GM12878 (cell line): ENCODE measurements at regions of chr11 and their contacts with region 1.

Region 1: DNA sequence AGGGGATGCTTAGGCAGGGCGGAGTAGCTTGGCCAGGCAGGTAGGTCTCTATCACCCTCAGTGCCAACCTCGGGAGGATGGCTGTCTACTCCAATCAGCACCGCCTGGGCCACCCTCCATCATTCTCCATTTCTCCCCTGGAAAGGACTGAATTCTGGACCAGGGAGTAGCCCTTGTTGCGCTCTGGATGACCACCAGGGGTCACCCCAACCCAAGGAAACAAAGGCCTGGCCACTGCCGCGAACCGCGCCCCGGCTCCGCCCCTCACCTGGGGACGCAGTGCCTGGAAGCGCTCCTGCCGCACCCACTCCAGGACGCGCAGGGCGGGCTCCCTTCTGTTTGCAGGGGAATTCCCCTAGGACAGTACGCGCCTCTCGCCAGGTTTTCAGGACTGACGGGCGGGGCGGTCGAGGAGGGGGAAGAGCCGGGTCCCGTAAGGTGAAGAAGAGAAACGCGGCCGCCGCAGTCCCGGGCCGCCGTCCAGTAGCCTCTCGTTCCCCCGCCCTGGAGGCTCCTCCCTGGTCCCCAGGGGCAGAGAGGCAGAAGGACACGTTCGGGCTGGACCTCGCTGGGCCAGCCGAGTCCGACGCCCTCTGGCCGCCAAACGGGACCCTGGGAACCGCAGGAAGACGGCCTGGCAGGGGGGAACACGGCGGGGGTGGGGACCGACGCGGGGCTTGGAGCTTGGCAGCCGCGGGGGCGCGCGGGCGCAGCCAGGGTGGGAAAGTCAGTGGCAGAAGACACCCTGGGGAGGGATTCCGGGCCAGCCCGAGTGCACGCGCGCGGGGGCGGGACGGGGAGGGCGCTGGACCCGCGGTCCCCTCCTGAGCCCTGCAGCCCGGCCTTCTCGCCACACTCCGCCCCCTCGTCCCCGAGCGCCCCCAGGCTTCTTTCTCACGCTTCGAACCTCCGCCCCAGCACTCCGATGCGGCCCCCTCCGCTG is 7.1 kb downstream of the SCN4B start:
- DNase-seq: peak; percentile 35
- ATAC-seq: peak; percentile 96
- H3K4me3 ChIP-seq: peak overlapping the region; percentile 73
- H3K27ac ChIP-seq: no peak overlapping the region
- H3K4me1 ChIP-seq: no peaks in the 10 kb centered on the region
- H3K27me3 ChIP-seq: peaks cover 5 to 10% of the 10 kb centered on the region in 2 experiments
- CTCF ChIP-seq: peak; percentile 82 to 90 (median 86)
- EP300 ChIP-seq: no peak
- POLR2A ChIP-seq: no peak
- RAD21 ChIP-seq: peak; percentile 83

Region 2: GRCh38 chr11:118095493-118095892 is 50.1 kb before region 1 on chr11:
- CTCF ChIA-PET with region 1: no interaction called
- POLR2A ChIA-PET with region 1: no interaction called
- RAD21 ChIA-PET with region 1: no interaction called
- SMC1A ChIA-PET with region 1: no interaction called
- in situ Hi-C with region 1: no loop called
- intact Hi-C with region 1: no loop called
- DNase-seq: no peak
- ATAC-seq: no peak
- H3K4me3 ChIP-seq: no peak overlapping the region
- H3K27ac ChIP-seq: no peak overlapping the region
- H3K4me1 ChIP-seq: no peaks in the 10 kb centered on the region; the same call in 1 of the 2 replicates
- H3K27me3 ChIP-seq: no peaks in the 10 kb centered on the region; a peak in 2 of 4 replicates
- CTCF ChIP-seq: no peak
- EP300 ChIP-seq: no peak
- POLR2A ChIP-seq: no peak
- RAD21 ChIP-seq: no peak

Region 3: GRCh38 chr11:118133816-118134215 is 11.7 kb before region 1 on chr11:
- CTCF ChIA-PET with region 1: interaction called, 11 read pairs
- POLR2A ChIA-PET with region 1: no interaction called
- RAD21 ChIA-PET with region 1: interaction called, 4 read pairs
- SMC1A ChIA-PET with region 1: interaction called, 5 read pairs
- in situ Hi-C with region 1: no loop called
- intact Hi-C with region 1: no loop called
- DNase-seq: no peak
- ATAC-seq: no peak
- H3K4me3 ChIP-seq: no peak overlapping the region
- H3K27ac ChIP-seq: no peak overlapping the region
- H3K4me1 ChIP-seq: no peaks in the 10 kb centered on the region
- H3K27me3 ChIP-seq: peaks cover 0 to 5% of the 10 kb centered on the region in 2 experiments; a peak in 3 of 4 replicates
- CTCF ChIP-seq: no peak
- EP300 ChIP-seq: no peak
- POLR2A ChIP-seq: no peak
- RAD21 ChIP-seq: no peak

Region 4: GRCh38 chr11:118171269-118172062 is 25.9 kb after region 1 on chr11:
- CTCF ChIA-PET with region 1: interaction called, 85 read pairs
- POLR2A ChIA-PET with region 1: no interaction called
- RAD21 ChIA-PET with region 1: interaction called, 52 read pairs
- SMC1A ChIA-PET with region 1: interaction called, 49 read pairs
- in situ Hi-C with region 1: no loop called
- intact Hi-C with region 1: loop called (anchors 1 kb)
- DNase-seq: no peak
- ATAC-seq: peak; percentile 91
- H3K4me3 ChIP-seq: no peak overlapping the region
- H3K27ac ChIP-seq: no peak overlapping the region
- H3K4me1 ChIP-seq: no peaks in the 10 kb centered on the region
- H3K27me3 ChIP-seq: peaks cover 0 to 3% of the 10 kb centered on the region in 2 experiments; a peak in 2 of 4 replicates
- CTCF ChIP-seq: peak; percentile 86 to 93 (median 88)
- EP300 ChIP-seq: no peak
- POLR2A ChIP-seq: no peak
- RAD21 ChIP-seq: peak; percentile 66

Region 5: GRCh38 chr11:118290923-118291322 is 145.4 kb after region 1 on chr11:
- CTCF ChIA-PET with region 1: interaction called, 23 read pairs
- POLR2A ChIA-PET with region 1: no interaction called
- RAD21 ChIA-PET with region 1: interaction called, 7 read pairs
- SMC1A ChIA-PET with region 1: interaction called, 3 read pairs
- in situ Hi-C with region 1: no loop called
- intact Hi-C with region 1: loop called (anchors 1 kb)
- DNase-seq: no peak
- ATAC-seq: peak; percentile 86
- H3K4me3 ChIP-seq: no peak overlapping the region
- H3K27ac ChIP-seq: no peak overlapping the region
- H3K4me1 ChIP-seq: no peaks in the 10 kb centered on the region
- H3K27me3 ChIP-seq: no peaks in the 10 kb centered on the region; a peak in 2 of 4 replicates
- CTCF ChIP-seq: peak; percentile 47 to 70 (median 49); a peak in 4 of 6 replicates
- EP300 ChIP-seq: no peak
- POLR2A ChIP-seq: no peak
- RAD21 ChIP-seq: peak; percentile 80

Region 6: DNA sequence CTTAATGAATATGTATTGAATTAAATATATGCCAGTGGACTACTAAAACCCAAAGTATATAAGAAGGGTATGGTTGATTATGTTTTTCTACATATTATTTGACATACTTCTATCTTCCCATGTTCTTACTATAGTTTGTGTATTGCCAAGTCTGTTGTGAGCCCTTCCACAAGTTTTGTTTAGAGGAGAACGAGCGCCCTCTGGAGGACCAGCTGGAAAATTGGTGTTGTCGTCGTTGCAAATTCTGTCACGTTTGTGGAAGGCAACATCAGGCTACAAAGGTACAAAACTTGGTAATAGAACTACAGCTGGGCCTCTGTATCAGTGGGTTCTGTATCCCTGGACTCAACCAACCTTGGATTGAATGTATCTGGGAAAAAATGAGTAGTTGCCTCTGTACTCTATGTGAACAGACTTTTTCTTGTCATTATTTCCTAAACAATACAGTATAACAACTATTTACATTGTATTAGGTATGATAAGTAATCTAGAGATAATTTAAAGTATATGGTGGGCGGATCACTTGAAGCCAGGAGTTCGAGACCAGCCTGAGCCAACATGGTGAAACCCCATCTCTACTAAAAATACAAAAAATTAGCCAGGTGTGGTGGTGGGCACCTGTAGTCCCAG is 343.0 kb after region 1 on chr11:
- CTCF ChIA-PET with region 1: interaction called, 3 read pairs
- POLR2A ChIA-PET with region 1: no interaction called
- RAD21 ChIA-PET with region 1: no interaction called
- SMC1A ChIA-PET with region 1: no interaction called
- in situ Hi-C with region 1: no loop called
- intact Hi-C with region 1: loop called (anchors 5 kb)
- DNase-seq: peak; percentile 35
- ATAC-seq: peak; percentile 84
- H3K4me3 ChIP-seq: no peak overlapping the region
- H3K27ac ChIP-seq: no peak overlapping the region
- H3K4me1 ChIP-seq: no peaks in the 10 kb centered on the region
- H3K27me3 ChIP-seq: no peaks in the 10 kb centered on the region
- CTCF ChIP-seq: peak; percentile 72 to 95 (median 80)
- EP300 ChIP-seq: no peak
- POLR2A ChIP-seq: no peak
- RAD21 ChIP-seq: peak; percentile 96

Region 7: DNA sequence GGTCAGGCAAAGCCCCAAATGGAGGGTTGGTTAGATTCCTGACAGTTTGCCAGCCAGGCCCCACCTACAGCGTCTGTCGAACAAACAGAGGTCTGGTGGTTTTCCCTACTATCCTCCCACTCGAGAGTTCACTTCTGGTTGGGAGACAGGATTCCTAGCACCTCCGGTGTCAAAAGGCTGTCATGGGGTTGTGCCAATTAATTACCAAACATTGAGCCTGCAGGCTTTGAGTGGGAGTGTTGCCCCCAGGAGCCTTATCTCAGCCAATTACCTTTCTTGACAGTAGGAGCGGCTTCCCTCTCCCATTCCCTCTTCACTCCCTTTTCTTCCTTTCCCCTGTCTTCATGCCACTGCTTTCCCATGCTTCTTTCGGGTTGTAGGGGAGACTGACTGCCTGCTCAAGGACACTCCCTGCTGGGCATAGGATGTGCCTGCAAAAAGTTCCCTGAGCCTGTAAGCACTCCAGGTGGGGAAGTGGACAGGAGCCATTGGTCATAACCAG is 377.1 kb after region 1 on chr11:
- CTCF ChIA-PET with region 1: no interaction called
- POLR2A ChIA-PET with region 1: no interaction called
- RAD21 ChIA-PET with region 1: no interaction called
- SMC1A ChIA-PET with region 1: no interaction called
- in situ Hi-C with region 1: no loop called
- intact Hi-C with region 1: no loop called
- DNase-seq: no peak
- ATAC-seq: no peak
- H3K4me3 ChIP-seq: no peak overlapping the region
- H3K27ac ChIP-seq: no peak overlapping the region
- H3K4me1 ChIP-seq: no peaks in the 10 kb centered on the region
- H3K27me3 ChIP-seq: no peaks in the 10 kb centered on the region
- CTCF ChIP-seq: peak in 2 of 3 experiments; percentile 11 to 28; a peak in 4 of 6 replicates
- EP300 ChIP-seq: no peak
- POLR2A ChIP-seq: no peak
- RAD21 ChIP-seq: no peak